A549 (cell line): ENCODE measurements at regions of chr11 and their contacts with region 1.

Region 1: DNA sequence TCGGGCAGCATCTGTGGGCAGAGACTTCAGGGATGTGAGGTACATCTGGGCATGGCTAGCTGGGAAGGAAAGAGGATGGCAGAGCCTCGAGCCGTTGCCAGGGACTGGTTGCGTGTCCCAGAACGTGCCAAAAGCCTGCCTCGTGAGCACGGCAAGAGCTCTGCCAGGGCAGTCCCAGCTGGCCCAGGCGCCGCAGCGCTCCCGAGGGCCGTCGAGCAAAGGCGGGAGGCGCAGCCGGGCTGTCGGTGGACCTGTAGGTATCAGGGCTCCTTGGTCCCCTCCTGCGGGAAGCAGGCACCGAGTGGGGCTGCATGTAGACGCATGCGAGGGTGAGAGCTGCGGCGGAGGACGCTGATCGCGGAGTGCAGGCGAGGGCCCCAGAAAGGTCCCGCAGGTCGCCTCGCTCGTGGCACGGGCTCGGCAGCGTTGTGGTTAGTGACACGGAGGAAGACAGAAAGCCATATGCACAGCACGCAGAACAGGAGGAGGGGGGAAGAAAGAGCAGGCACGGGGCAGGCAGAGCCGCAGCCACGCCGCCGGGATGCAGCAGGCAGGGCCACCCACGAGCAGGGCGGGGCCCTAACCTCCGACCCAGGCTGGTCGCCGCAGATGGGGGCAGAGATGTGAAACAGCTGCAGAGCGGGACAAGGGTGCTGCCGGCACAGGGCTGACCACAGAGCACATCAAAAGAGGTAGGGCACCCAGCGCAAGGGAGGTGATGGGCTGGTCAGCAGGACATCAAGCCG is 18.0 kb downstream of the LSP1 start:
- DNase-seq: no peak
- ATAC-seq: peak in 1 of 2 experiments; percentile 34; a peak in 3 of 6 replicates
- H3K4me3 ChIP-seq: no peak overlapping the region
- H3K27ac ChIP-seq: peak overlapping the region in 1 of 2 experiments; percentile 56; a peak in 3 of 6 replicates
- H3K4me1 ChIP-seq: peaks cover 25% of the 10 kb centered on the region
- CTCF ChIP-seq: no peak
- EP300 ChIP-seq: no peak
- POLR2A ChIP-seq: no peak
- RAD21 ChIP-seq: no peak

Region 2: DNA sequence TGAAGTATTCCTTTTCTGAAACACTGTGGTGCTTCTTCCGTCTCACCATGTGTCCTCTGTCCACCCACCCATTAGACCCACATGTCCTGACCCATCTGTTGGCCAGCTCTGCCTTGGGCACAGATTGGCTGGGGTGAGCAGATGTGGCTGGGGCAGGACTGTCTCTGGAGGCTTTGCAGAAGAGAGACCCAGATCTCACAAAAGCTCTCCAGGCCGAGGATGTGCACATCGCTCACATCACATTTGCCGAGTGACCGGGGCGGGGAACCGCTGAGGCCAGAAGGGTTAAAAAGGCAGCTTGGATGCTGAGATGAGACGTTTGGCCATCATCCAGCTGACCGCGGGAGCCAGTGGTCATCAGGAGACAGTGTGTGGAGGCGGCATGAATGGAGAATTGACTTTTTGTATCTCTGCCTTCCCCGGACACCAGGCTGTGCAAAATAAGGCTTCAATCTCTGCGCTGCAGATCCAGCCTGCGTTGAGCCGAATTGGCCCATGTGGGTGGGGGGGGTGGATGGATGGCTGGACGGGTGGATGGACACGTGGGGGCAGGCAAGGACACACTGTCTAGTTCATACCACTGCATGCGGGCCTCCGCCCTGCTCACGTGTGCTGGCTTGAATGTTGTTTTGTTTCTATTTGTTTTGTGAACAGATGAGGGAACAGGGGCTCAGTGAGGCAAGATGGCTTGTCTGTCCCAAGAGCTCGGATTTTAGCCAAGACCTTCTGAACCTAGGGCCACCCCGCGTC is 126.6 kb before region 1 on chr11:
- CTCF ChIA-PET with region 1: no interaction called
- POLR2A ChIA-PET with region 1: no interaction called
- DNase-seq: no peak
- ATAC-seq: peak in 1 of 2 experiments; percentile 9; a peak in 2 of 6 replicates
- H3K4me3 ChIP-seq: no peak overlapping the region
- H3K27ac ChIP-seq: no peak overlapping the region
- H3K4me1 ChIP-seq: peaks cover 6% of the 10 kb centered on the region; the same call in 2 of the 3 replicates
- CTCF ChIP-seq: no peak
- EP300 ChIP-seq: no peak
- POLR2A ChIP-seq: no peak
- RAD21 ChIP-seq: no peak

Region 3: GRCh38 chr11:1796413-1797011 is 74.4 kb before region 1 on chr11:
- CTCF ChIA-PET with region 1: no interaction called
- POLR2A ChIA-PET with region 1: no interaction called
- DNase-seq: no peak
- ATAC-seq: peak in 1 of 2 experiments; percentile 45; a peak in 3 of 6 replicates
- H3K4me3 ChIP-seq: no peak overlapping the region
- H3K27ac ChIP-seq: no peak overlapping the region
- H3K4me1 ChIP-seq: no peaks in the 10 kb centered on the region
- CTCF ChIP-seq: no peak
- EP300 ChIP-seq: no peak
- POLR2A ChIP-seq: no peak
- RAD21 ChIP-seq: no peak

Region 4: GRCh38 chr11:1845561-1846452 is 25.1 kb before region 1 on chr11:
- CTCF ChIA-PET with region 1: interaction called, 22 read pairs
- POLR2A ChIA-PET with region 1: no interaction called
- DNase-seq: no peak
- ATAC-seq: no peak
- H3K4me3 ChIP-seq: no peak overlapping the region
- H3K27ac ChIP-seq: no peak overlapping the region
- H3K4me1 ChIP-seq: peaks cover 7% of the 10 kb centered on the region
- CTCF ChIP-seq: no peak
- EP300 ChIP-seq: no peak
- POLR2A ChIP-seq: no peak
- RAD21 ChIP-seq: no peak

Region 5: DNA sequence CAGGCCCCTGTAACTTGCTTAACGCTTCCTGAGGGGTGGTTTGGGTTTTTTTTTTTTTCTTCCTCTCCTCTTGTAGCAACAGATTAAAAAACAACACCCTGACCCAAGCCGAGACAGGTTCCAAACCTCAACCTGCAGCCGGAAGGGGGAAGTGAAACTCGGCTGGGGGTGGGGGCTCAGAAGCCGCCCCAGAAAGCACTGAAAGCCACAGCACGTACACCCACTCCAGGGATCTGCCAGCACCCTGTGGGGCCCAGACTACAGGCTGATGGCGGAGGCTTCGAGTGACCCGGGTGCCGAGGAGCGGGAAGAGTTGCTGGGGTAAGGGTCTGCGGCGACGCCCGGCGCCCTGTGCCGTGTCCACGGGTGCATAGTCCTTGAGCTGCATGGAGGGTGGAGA is 18.0 kb before region 1 on chr11 and contains the start of gene LSP1:
- CTCF ChIA-PET with region 1: interaction called, 22 read pairs
- POLR2A ChIA-PET with region 1: no interaction called
- DNase-seq: no peak
- ATAC-seq: no peak
- H3K4me3 ChIP-seq: no peak within 1 kb of the TSS
- H3K27ac ChIP-seq: no peak within 1 kb of the TSS
- H3K4me1 ChIP-seq: no peaks in the 10 kb centered on the region
- CTCF ChIP-seq: no peak
- EP300 ChIP-seq: no peak
- POLR2A ChIP-seq: no peak
- RAD21 ChIP-seq: no peak
- polyA plus RNA-seq, gene LSP1: 0.42 and 0.67 TPM in 2 replicates